PC-9 (cell line): ENCODE measurements at regions of chr12 and their contacts with region 1.

Region 1: DNA sequence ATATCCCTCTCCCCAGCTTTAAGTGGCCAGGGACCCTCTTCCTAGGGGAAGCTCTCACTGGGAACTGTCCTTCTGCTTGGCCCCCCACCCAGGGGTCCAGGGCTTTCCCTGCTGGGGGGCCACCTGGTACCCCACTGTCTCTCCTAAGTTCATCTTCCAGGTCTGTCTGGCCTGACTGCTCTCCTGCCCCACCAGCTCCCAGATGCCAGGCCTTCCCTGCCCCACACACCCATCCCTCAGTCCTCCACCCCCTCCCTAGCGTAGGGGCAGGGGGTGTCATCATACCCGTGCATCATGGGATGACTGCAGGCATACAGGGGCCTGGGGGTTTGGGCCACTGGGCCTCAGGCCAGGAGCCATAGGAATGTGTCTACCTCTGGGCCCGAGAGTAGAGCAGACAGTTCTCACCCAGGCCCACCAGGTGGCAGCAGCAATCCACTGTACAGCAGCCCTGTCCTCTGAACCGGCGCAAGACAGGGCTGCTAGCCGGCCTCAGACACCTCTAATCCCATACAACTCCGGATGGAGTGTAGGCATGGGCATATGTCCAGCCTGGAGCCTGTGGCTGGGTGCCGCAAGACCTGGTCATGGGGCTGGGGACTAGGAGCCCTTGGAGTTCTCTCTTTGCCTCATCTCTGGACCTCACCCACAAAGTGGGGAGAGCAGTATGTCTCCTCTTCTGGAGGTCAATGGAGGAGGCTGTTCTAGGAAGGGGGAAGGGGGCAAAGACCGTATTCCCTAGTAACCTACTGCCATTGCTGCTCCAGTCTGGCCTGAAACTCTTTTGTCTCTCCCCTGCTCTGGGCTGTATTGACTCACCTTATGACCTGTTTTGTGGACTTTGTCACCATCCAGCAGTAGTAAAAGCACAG is 10.0 kb upstream of the SMARCD1 start:
- DNase-seq: peak; percentile 71 to 84
- H3K4me3 ChIP-seq: no peak overlapping the region
- H3K27ac ChIP-seq: no peak overlapping the region
- H3K4me1 ChIP-seq: no peaks in the 10 kb centered on the region
- H3K27me3 ChIP-seq: no peaks in the 10 kb centered on the region
- CTCF ChIP-seq: peak; percentile 91

Region 2: GRCh38 chr12:49842519-49843352 is 232.4 kb before region 1 on chr12 and contains the start of gene BCDIN3D:
- CTCF ChIA-PET with region 1: no interaction called
- POLR2A ChIA-PET with region 1: no interaction called
- intact Hi-C with region 1: loop called (anchors 2 kb)
- DNase-seq: peak; percentile 89 to 92
- H3K4me3 ChIP-seq: peak within 1 kb of the TSS; percentile 69
- H3K27ac ChIP-seq: peak within 1 kb of the TSS; percentile 77
- H3K4me1 ChIP-seq: peaks cover 21% of the 10 kb centered on the region
- H3K27me3 ChIP-seq: no peaks in the 10 kb centered on the region
- CTCF ChIP-seq: no peak
- total RNA-seq, gene BCDIN3D: 2.5 and 4.7 TPM in 2 replicates

Region 3: GRCh38 chr12:50043854-50044253 is 31.3 kb before region 1 on chr12:
- CTCF ChIA-PET with region 1: interaction called, 7 read pairs
- POLR2A ChIA-PET with region 1: no interaction called
- intact Hi-C with region 1: loop called (anchors 1 kb)
- DNase-seq: no peak
- H3K4me3 ChIP-seq: no peak overlapping the region
- H3K27ac ChIP-seq: no peak overlapping the region
- H3K4me1 ChIP-seq: no peaks in the 10 kb centered on the region
- H3K27me3 ChIP-seq: no peaks in the 10 kb centered on the region
- CTCF ChIP-seq: no peak

Region 4: GRCh38 chr12:51351913-51352532 is 1276.9 kb after region 1 on chr12:
- CTCF ChIA-PET with region 1: no interaction called
- POLR2A ChIA-PET with region 1: no interaction called
- intact Hi-C with region 1: loop called (anchors 5 kb)
- DNase-seq: peak in 1 of 2 experiments; percentile 55
- H3K4me3 ChIP-seq: no peak overlapping the region
- H3K27ac ChIP-seq: no peak overlapping the region
- H3K4me1 ChIP-seq: no peaks in the 10 kb centered on the region
- H3K27me3 ChIP-seq: no peaks in the 10 kb centered on the region
- CTCF ChIP-seq: peak; percentile 72